Thyroid gland (tissue), 4 donors: ENCODE measurements at regions of chr4 and their contacts with region 1.

Region 1: GRCh38 chr4:99058228-99058627 is 30.4 kb downstream of the ADH5 start:
- DNase-seq: no peak
- H3K4me3 ChIP-seq: no peak overlapping the region
- H3K27ac ChIP-seq: no peak overlapping the region
- H3K4me1 ChIP-seq: peaks cover 13 to 16% of the 10 kb centered on the region in 2 donors
- H3K27me3 ChIP-seq: no peaks in the 10 kb centered on the region
- CTCF ChIP-seq: no peak
- POLR2A ChIP-seq: no peak

Region 2: DNA sequence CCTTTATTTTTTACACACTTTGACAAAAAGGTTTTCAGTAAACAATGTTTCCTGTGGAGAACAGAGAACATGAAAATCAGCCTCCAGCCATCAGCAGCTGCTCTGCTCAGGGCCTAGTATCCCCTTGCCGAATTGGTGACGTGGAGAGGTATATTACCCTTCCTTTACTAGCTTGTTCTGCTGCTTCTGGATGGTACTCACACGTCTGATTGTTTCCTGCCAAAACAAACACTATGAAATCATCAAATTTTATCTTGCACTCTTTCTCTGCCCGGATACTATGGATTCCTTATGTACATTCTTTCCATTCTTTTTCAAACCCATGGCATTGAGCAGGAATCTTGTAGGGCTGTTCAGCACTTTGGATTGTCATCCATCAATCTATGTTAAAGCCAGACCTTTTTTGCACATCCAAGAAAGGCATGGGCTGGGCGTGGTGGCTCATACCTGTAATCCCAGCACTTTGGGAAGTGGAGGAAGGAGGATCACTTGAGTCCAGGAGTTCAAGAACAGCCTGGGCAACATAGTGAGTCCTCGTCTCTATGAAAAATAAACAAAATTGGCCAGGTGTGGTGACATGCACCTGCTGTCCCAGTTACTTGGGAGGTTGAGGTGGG is 81.4 kb before region 1 on chr4:
- intact Hi-C with region 1: no loop called
- DNase-seq: no peak
- H3K4me3 ChIP-seq: no peak overlapping the region
- H3K27ac ChIP-seq: no peak overlapping the region
- H3K4me1 ChIP-seq: no peaks in the 10 kb centered on the region
- H3K27me3 ChIP-seq: no peaks in the 10 kb centered on the region
- CTCF ChIP-seq: no peak
- POLR2A ChIP-seq: no peak

Region 3: GRCh38 chr4:98995183-98996055 is 62.8 kb before region 1 on chr4 and contains the start of gene METAP1:
- intact Hi-C with region 1: loop called (anchors 5 kb)
- DNase-seq: peak; percentile 96 to 97
- H3K4me3 ChIP-seq: peak within 1 kb of the TSS; percentile 51 to 94 (median 84)
- H3K27ac ChIP-seq: peak within 1 kb of the TSS; percentile 86 to 97 (median 94)
- H3K4me1 ChIP-seq: peaks cover 12 to 21% of the 10 kb centered on the region in 2 donors
- H3K27me3 ChIP-seq: no peaks in the 10 kb centered on the region
- CTCF ChIP-seq: peak; percentile 19 to 74 (median 58)
- POLR2A ChIP-seq: peak; percentile 52 to 75
- total RNA-seq, gene METAP1: 33.4 to 43.1 (median 37.6) TPM